Stomach (tissue), 19 donors: ENCODE measurements at regions of chr10 and their contacts with region 1.

Region 1: GRCh38 chr10:96509017-96509641 is 4.6 kb downstream of the TLL2 start:
- DNase-seq: no peak
- H3K4me3 ChIP-seq: no peak overlapping the region
- H3K27ac ChIP-seq: no peak overlapping the region
- H3K4me1 ChIP-seq: peaks cover 17 to 22% (median 21%) of the 10 kb centered on the region in 4 donors
- H3K27me3 ChIP-seq: peaks cover 0 to 29% (median 17%) of the 10 kb centered on the region in 3 donors
- CTCF ChIP-seq: no peak
- EP300 ChIP-seq: no peak
- POLR2A ChIP-seq: no peak

Region 2: GRCh38 chr10:96334616-96335526 is 174.3 kb before region 1 on chr10:
- intact Hi-C with region 1: no loop called
- DNase-seq: peak in 1 of 2 donors; percentile 66
- H3K4me3 ChIP-seq: no peak overlapping the region
- H3K27ac ChIP-seq: no peak overlapping the region
- H3K4me1 ChIP-seq: no peaks in the 10 kb centered on the region
- H3K27me3 ChIP-seq: peaks cover 0 to 14% (median 0%) of the 10 kb centered on the region in 3 donors
- CTCF ChIP-seq: peak in 5 of 7 experiments; percentile 33 to 68 (median 49)
- EP300 ChIP-seq: no peak
- POLR2A ChIP-seq: no peak

Region 3: GRCh38 chr10:96380817-96381216 is 128.3 kb before region 1 on chr10:
- intact Hi-C with region 1: loop called (anchors 10 kb)
- DNase-seq: no peak
- H3K4me3 ChIP-seq: no peak overlapping the region
- H3K27ac ChIP-seq: no peak overlapping the region
- H3K4me1 ChIP-seq: peaks cover 0 to 12% (median 7%) of the 10 kb centered on the region in 4 donors
- H3K27me3 ChIP-seq: peaks cover 0 to 11% (median 3%) of the 10 kb centered on the region in 3 donors
- CTCF ChIP-seq: no peak
- EP300 ChIP-seq: no peak
- POLR2A ChIP-seq: no peak

Region 4: GRCh38 chr10:96556003-96556402 is 46.9 kb after region 1 on chr10:
- intact Hi-C with region 1: no loop called
- DNase-seq: peak in 1 of 2 donors; percentile 35
- H3K4me3 ChIP-seq: no peak overlapping the region
- H3K27ac ChIP-seq: no peak overlapping the region
- H3K4me1 ChIP-seq: peaks cover 0 to 38% (median 19%) of the 10 kb centered on the region in 4 donors
- H3K27me3 ChIP-seq: no peaks in the 10 kb centered on the region
- CTCF ChIP-seq: peak in 1 of 7 experiments; percentile 24
- EP300 ChIP-seq: no peak
- POLR2A ChIP-seq: no peak